Ovary (tissue), 10 donors: ENCODE measurements at regions of chr7 and their contacts with region 1.

Region 1: DNA sequence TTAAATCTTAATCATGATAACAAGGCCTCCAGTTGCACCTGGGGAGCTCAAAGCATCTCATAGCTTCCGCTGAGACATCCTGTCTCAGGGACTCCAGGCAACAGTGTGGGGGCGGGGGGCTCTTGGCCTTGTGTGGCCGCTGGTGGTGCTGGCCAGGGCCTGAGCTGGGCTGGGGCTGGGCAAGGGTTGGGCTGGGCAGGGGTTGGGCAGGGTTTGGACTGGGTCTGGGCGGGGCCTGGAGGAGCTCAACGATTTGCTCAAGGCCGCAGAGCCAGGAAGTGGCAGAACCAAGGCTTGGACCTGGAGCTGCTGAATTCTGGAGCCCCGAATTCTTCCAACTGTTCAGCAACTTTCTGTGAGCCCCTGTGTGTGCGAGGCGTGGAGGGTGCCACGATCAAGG is 37.9 kb upstream of the PSMG3 start:
- DNase-seq: no peak
- H3K4me3 ChIP-seq: no peak overlapping the region
- H3K27ac ChIP-seq: no peak overlapping the region
- H3K4me1 ChIP-seq: no peaks in the 10 kb centered on the region
- H3K27me3 ChIP-seq: no peaks in the 10 kb centered on the region
- CTCF ChIP-seq: no peak
- EP300 ChIP-seq: no peak
- POLR2A ChIP-seq: no peak

Region 2: DNA sequence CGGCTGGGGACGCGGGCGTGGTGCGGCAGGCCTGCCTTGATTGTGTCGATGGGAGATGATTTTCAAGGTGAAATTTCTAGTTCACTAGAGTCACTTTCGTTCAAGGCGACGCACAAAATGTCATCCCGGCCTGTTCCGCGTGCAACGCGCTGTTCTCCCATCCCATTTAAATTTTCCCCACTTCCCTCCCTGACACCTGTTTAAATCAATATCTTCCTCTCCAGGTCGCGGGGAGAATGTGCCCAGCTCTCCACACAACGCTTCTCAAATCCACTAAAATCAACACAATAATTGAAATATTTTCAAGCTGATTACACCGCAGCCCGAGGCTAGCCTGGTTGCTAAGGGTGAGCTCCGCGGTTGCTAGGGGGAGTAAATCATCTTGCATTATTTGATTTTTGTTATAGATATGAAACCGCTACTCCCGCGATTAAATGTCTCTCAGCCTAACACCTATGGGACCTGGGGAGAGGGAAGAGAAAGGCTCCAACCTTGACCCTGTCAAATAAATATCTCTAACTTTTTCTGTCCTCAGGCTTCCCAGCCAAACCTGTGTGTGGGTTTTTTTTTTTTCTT is 338.9 kb before region 1 on chr7:
- intact Hi-C with region 1: loop called in 1 of 4 experiments (anchors 10 kb)
- DNase-seq: no peak
- H3K4me3 ChIP-seq: no peak overlapping the region
- H3K27ac ChIP-seq: no peak overlapping the region
- H3K4me1 ChIP-seq: no peaks in the 10 kb centered on the region
- H3K27me3 ChIP-seq: no peaks in the 10 kb centered on the region
- CTCF ChIP-seq: no peak
- EP300 ChIP-seq: no peak
- POLR2A ChIP-seq: no peak